AG04450 (cell line): ENCODE measurements at regions of chr3 and their contacts with region 1.

Region 1: DNA sequence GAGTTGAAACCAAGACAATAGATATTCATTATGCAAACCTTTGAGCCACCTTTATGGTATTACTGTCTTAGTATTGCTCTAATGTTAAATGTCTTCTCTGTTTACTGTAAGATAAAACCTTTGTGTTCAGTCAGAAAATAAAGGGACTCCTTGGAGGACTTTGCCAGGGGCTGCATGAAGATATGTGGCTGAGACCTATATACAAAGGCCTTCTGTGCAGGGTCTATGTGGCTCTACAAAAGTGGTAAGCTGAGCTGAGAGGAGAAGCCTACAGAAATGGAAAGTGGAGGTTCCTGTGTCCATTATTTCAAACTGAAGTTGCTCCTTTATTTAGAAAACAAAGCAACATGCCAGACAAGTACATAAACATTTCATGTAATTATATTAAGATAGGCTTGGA is 131.5 kb downstream of the FNDC3B start:
- DNase-seq: no peak
- H3K4me3 ChIP-seq: no peak overlapping the region
- H3K27ac ChIP-seq: no peak overlapping the region
- H3K27me3 ChIP-seq: no peaks in the 10 kb centered on the region
- CTCF ChIP-seq: no peak

Region 2: DNA sequence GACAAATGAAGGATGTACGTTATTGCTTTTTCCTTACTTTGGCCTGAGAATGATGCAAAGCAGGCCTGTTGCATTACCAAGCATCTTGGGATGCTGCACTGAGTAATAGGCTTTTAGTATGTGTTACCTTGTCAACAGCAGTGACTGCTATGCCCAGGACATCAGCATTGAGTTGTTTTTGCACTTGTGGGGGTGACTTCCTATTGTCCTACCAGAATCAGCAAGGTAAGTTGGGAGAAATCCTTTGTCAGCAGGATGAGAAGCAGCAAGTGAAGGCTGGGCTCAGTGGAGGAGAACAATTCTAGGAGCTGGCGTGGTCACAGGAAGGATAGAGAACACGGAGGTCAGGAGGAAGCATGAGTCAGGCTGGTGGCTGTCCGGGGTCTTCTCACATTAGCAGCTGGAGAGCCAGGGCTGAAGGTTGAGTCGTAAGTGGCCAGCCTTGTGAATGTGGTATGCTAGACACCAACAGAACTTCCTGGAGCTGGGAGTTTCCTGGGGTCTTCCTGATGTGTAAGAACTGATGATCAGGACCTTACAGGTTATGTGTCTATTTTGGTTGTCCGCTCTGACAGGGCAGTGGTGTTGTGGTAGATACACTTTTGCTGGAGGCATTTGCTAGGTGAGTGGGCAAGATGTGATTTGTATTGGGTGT is 11.2 kb after region 1 on chr3:
- CTCF ChIA-PET with region 1: no interaction called
- POLR2A ChIA-PET with region 1: interaction called, 12 read pairs
- DNase-seq: no peak
- H3K4me3 ChIP-seq: no peak overlapping the region
- H3K27ac ChIP-seq: peak overlapping the region; percentile 54
- H3K27me3 ChIP-seq: no peaks in the 10 kb centered on the region
- CTCF ChIP-seq: no peak